Activated naive CD4-positive, alpha-beta T cell treated with anti-CD3 and anti-CD28 coated beads, Interleukin-2, amount 10 ng/mL, durations not matched to agents 7 days and 5 days (primary cell): ENCODE measurements at regions of chr17 and their contacts with region 1.

Region 1: GRCh38 chr17:68172461-68172954 is 75.3 kb upstream of the AMZ2 start:
- DNase-seq: peak; percentile 84
- H3K4me3 Mint-ChIP-seq: no peak overlapping the region
- H3K27ac Mint-ChIP-seq: no peak overlapping the region
- H3K4me1 Mint-ChIP-seq: peaks cover 34% of the 10 kb centered on the region
- H3K27me3 Mint-ChIP-seq: peaks cover 32% of the 10 kb centered on the region

Region 2: DNA sequence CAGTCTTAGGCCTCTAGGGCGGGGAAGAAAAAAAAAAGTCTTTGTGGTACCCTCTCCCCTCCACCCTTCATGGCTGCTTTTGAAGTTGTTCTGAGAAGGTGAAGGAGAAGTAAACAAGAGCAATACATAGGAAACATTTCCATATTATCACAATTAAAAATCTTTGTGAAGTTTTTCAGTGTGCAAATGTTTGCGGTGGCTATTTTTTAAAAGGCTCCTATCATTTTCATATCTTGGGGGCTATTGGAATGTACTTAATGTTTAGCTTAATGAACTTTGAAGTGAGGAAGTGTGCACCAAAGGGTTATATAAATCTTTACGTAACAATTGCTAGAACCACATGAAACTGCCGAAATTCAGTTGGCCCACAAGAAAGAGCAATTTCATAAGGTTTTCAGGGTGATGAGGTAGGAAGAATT is 447.1 kb before region 1 on chr17:
- CTCF ChIA-PET with region 1: no interaction called
- DNase-seq: peak; percentile 36
- H3K4me3 Mint-ChIP-seq: peak overlapping the region; percentile 48
- H3K27ac Mint-ChIP-seq: peak overlapping the region; percentile 99
- H3K4me1 Mint-ChIP-seq: peaks cover 60% of the 10 kb centered on the region
- H3K27me3 Mint-ChIP-seq: no peaks in the 10 kb centered on the region

Region 3: DNA sequence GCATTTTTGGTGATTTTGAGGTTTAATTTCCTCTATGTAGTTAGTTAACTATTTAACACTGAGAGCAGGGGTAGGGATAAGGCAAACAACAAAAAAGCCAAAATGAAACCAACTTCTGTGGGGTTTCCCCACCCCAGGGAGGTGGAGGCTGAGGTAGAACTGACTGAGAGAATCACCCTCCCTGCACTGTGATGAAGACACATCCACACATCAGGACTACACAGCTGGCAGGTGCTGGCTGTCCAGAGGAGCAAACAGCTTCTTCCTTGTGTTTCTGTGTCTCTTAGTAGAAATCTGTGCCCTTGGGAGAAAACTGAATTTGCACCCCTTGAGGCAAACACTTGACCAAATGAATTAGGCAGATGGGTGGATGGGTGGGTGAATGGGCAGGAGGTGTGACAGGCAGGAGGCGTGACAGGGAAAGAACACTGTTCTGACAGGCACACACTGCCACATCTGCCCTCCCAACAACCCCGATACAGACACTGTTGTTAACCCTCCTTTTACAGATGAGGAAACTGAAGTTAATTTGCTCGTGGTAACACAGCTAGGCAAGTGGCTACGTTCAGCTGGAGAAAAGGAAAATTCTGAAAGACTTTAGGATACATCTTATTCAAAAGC is 12.4 kb after region 1 on chr17:
- CTCF ChIA-PET with region 1: interaction called, 28 read pairs
- DNase-seq: peak; percentile 78
- H3K4me3 Mint-ChIP-seq: peak overlapping the region; percentile 45
- H3K27ac Mint-ChIP-seq: peak overlapping the region; percentile 91
- H3K4me1 Mint-ChIP-seq: peaks cover 61% of the 10 kb centered on the region
- H3K27me3 Mint-ChIP-seq: peaks cover 14% of the 10 kb centered on the region

Region 4: DNA sequence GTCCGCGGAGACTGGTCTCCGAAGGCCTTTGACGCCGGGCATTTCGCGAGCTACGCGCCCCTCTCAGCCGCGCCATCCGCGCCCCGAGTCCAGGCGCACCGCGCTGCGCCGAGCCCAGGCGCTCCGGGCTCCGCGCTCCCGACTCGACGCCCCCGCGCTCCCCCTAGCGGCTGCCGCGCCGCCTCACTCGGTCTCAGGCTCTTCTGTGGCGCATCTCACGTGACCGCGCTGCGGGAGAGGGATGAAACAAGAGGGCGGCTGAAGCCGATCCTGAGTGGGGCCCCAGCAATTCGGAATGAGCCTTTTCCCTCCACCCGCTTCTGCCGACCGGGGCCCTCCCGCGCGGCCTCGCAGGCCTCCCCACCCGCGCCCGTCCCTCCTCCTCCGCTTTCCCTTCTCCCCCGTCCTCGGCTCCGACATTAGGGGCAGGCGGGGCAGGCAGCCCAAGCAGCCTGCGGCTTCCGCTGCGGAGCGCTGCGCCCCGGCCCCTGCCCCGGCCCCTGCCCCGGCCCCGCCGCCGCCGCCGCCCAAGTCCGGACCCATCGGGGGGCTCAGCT is 32.8 kb after region 1 on chr17:
- CTCF ChIA-PET with region 1: interaction called, 94 read pairs
- DNase-seq: peak; percentile 93
- H3K4me3 Mint-ChIP-seq: peak overlapping the region; percentile 81
- H3K27ac Mint-ChIP-seq: peak overlapping the region; percentile 93
- H3K4me1 Mint-ChIP-seq: peaks cover 39% of the 10 kb centered on the region
- H3K27me3 Mint-ChIP-seq: peaks cover 51% of the 10 kb centered on the region

Region 5: GRCh38 chr17:68435876-68436842 is 263.7 kb after region 1 on chr17:
- CTCF ChIA-PET with region 1: interaction called, 13 read pairs
- DNase-seq: peak; percentile 91
- H3K4me3 Mint-ChIP-seq: peak overlapping the region; percentile 53
- H3K27ac Mint-ChIP-seq: peak overlapping the region; percentile 90
- H3K4me1 Mint-ChIP-seq: peaks cover 80% of the 10 kb centered on the region
- H3K27me3 Mint-ChIP-seq: no peaks in the 10 kb centered on the region

Region 6: DNA sequence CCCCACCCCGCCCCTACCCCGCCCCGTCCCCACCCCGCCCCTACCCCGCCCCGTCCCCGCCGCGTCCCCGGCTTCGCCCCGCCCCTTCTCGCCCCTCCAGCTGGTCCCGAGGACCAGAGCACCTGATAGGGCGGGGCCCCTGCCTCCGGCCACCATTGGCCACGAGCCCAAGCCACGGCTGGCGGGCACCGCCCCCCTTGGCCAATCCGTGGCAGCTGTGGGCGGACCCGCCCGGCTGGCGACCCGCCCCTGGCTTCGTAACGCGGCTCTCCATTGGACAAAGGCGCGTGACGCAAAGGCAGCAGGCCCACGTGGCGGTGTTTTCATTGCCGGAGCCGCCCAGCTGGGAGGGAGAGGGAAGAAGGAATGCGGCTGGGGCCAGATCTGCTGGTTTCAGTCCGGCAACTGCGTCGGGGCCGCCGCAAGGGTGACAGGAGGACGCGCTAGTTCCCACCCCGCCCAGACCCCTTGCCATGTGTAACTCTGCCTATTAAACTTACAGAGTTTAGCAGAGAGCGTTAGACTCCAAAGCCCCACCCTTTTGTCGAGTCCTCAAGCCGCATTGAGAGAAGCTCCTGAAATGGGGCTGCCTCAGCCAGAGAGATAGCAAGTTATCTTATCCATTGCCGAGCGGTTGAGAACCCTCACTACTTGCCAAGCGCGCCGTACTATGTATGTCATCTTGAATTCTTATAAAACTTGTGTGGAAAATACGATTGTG is 285.2 kb after region 1 on chr17:
- CTCF ChIA-PET with region 1: interaction called, 14 read pairs
- DNase-seq: peak; percentile 98
- H3K4me3 Mint-ChIP-seq: peak overlapping the region; percentile 77
- H3K27ac Mint-ChIP-seq: peak overlapping the region; percentile 86
- H3K4me1 Mint-ChIP-seq: peaks cover 81% of the 10 kb centered on the region
- H3K27me3 Mint-ChIP-seq: peaks cover 4% of the 10 kb centered on the region

Region 7: GRCh38 chr17:68463211-68464019 is 290.9 kb after region 1 on chr17:
- CTCF ChIA-PET with region 1: interaction called, 14 read pairs
- DNase-seq: no peak
- H3K4me3 Mint-ChIP-seq: no peak overlapping the region
- H3K27ac Mint-ChIP-seq: peak overlapping the region; percentile 96
- H3K4me1 Mint-ChIP-seq: peaks cover 56% of the 10 kb centered on the region
- H3K27me3 Mint-ChIP-seq: peaks cover 12% of the 10 kb centered on the region